ENCODE measurements at regions of chr3 and their contacts with region 1.

Region 1: GRCh38 chr3:188664795-188665194 is 507.0 kb upstream of the TPRG1 start:
- DNase-seq: no peak
- ATAC-seq: peak in 3 of 4 donors; percentile 33 to 44 (median 36)
- H3K4me3 ChIP-seq: no peak overlapping the region
- H3K27ac ChIP-seq: no peak overlapping the region
- H3K4me1 ChIP-seq: peaks cover 0 to 34% (median 9%) of the 10 kb centered on the region in 12 donors
- H3K27me3 ChIP-seq: no peaks in the 10 kb centered on the region
- CTCF ChIP-seq: peak in 6 of 12 donors; percentile 7 to 20 (median 16)
- POLR2A ChIP-seq: no peak

Region 2: GRCh38 chr3:188617988-188618701 is 46.6 kb before region 1 on chr3:
- intact Hi-C with region 1: no loop called
- DNase-seq: no peak
- ATAC-seq: no peak
- H3K4me3 ChIP-seq: no peak overlapping the region
- H3K27ac ChIP-seq: peak overlapping the region in 1 of 12 donors; percentile 39
- H3K4me1 ChIP-seq: peaks cover 0 to 16% (median 0%) of the 10 kb centered on the region in 12 donors
- H3K27me3 ChIP-seq: no peaks in the 10 kb centered on the region
- CTCF ChIP-seq: no peak
- POLR2A ChIP-seq: no peak

Region 3: GRCh38 chr3:188631291-188632010 is 33.3 kb before region 1 on chr3:
- intact Hi-C with region 1: loop called in 1 of 10 experiments (anchors 5 kb)
- DNase-seq: no peak
- ATAC-seq: no peak
- H3K4me3 ChIP-seq: no peak overlapping the region
- H3K27ac ChIP-seq: no peak overlapping the region
- H3K4me1 ChIP-seq: peaks cover 0 to 24% (median 6%) of the 10 kb centered on the region in 12 donors
- H3K27me3 ChIP-seq: no peaks in the 10 kb centered on the region
- CTCF ChIP-seq: no peak
- POLR2A ChIP-seq: no peak